ENCODE measurements at regions of chr19 and their contacts with region 1.

Region 1: GRCh38 chr19:7705387-7706187 is 3.7 kb upstream of the FCER2 start:
- DNase-seq: peak; percentile 88
- ATAC-seq: peak; percentile 94
- H3K4me3 Mint-ChIP-seq: no peak overlapping the region
- H3K27ac Mint-ChIP-seq: peak overlapping the region; percentile 80
- H3K4me1 Mint-ChIP-seq: peaks cover 40% of the 10 kb centered on the region
- H3K27me3 Mint-ChIP-seq: no peaks in the 10 kb centered on the region

Region 2: DNA sequence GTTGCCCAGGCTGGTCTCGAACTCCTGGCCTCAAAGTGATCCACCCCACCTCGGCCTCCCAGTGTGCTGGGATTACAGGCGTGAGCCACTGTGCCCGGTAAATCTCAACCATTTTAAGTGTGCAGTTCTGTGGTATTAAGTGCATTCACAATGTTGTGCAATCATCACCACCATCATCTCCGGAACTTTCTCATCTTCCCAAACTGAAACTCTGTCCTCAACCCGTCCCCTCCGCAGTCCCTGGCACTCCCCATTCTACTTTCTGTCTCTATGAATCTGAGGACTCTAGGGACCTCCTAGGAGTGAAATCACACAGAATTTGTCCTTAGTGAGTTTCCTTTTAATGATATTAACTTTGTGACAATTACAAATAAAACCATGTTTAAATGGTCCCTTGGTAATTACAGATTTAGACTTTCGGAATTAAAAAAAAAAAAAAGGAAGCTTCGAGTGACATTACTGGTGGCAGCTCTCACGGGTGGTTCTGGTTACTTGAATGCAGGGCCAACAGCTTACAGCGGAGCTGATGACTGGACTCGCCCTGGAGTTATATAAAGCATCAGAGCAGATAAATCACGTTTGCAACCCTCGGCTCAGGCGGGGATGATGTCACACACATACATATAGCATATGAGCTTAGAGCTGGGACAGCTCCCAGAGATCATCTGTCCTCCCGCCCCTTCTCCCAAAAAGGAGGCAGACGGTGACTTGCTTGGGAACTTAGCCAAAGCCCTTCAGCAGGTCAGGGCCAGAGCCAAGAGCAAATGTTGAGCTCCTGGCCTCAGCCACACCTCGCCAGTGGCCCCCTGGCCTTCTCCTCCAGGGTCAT is 546.3 kb before region 1 on chr19:
- CTCF ChIA-PET with region 1: no interaction called
- POLR2A ChIA-PET with region 1: no interaction called
- intact Hi-C with region 1: no loop called
- DNase-seq: no peak
- ATAC-seq: no peak
- H3K4me3 Mint-ChIP-seq: no peak overlapping the region
- H3K27ac Mint-ChIP-seq: no peak overlapping the region
- H3K4me1 Mint-ChIP-seq: no peaks in the 10 kb centered on the region
- H3K27me3 Mint-ChIP-seq: no peaks in the 10 kb centered on the region

Region 3: GRCh38 chr19:7734220-7735203 is 28.9 kb after region 1 on chr19:
- CTCF ChIA-PET with region 1: no interaction called
- POLR2A ChIA-PET with region 1: no interaction called
- intact Hi-C with region 1: loop called in 1 of 2 experiments (anchors 5 kb)
- DNase-seq: no peak
- ATAC-seq: no peak
- H3K4me3 Mint-ChIP-seq: no peak overlapping the region
- H3K27ac Mint-ChIP-seq: no peak overlapping the region
- H3K4me1 Mint-ChIP-seq: peaks cover 14% of the 10 kb centered on the region
- H3K27me3 Mint-ChIP-seq: peaks cover 41% of the 10 kb centered on the region

Region 4: DNA sequence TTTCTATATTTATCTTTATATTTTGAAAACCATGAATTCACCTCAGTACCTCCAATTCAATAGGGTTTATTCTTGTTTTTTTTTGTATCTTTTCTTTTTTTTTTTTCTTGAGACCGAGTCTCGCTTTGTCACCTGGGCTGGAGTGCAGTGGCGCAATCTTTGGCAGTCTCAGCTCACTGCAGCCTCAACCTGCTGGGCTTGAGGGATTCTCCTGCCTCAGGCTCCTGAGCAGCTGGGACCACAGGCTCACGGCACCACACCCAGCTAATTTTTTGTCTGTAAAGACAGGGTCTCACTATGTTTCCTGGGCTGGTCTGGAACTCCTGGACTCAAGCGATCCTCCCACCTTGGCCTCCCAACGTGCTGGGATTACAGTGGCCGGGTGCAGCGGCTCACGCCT is 101.3 kb after region 1 on chr19:
- CTCF ChIA-PET with region 1: no interaction called
- POLR2A ChIA-PET with region 1: no interaction called
- intact Hi-C with region 1: loop called in 1 of 2 experiments (anchors 1 kb)
- DNase-seq: no peak
- ATAC-seq: no peak
- H3K4me3 Mint-ChIP-seq: no peak overlapping the region
- H3K27ac Mint-ChIP-seq: no peak overlapping the region
- H3K4me1 Mint-ChIP-seq: peaks cover 11% of the 10 kb centered on the region
- H3K27me3 Mint-ChIP-seq: peaks cover 35% of the 10 kb centered on the region

Region 5: DNA sequence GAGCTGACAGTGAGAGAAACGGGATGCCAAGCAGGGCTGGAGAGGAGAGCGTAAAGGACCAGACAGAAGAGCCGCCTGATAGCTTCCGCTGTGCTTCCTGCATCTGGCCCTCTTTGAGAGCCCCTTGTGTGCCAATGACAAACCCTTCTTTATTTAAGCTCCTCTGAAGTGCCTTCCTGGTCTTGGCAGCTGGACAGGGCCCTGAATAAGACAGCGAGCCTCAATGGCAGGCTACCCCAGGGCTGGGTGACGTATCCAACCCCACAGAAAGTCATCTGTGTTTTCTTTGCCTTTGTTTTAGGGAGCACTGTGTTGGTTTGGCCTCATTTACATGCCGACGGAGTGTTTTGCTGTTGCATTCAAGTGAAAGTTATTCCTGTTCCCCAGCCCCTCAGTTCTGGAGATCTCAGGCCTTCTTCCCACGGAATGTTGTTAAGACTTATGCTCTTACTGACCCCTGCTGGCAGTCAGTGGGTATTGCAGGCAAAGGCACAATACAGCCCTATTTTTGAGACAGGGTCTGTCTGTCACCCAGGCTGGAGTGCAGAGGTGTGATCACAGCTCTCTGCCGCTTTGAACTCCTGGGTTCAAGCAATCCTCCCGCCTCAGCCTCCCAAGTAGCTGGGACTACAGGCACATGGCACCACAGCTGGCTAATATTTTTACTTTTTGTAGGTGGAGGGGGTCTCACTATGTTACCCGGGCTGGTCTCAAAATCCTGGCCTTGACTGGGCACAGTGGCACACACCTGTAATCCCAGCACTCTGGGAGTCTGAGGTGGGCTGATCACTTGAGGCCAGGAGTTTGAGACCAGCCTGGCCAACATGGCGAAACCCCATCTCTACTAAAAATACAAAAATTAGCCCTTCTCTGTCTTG is 363.7 kb after region 1 on chr19:
- CTCF ChIA-PET with region 1: no interaction called
- POLR2A ChIA-PET with region 1: no interaction called
- intact Hi-C with region 1: no loop called
- DNase-seq: peak; percentile 48
- ATAC-seq: no peak
- H3K4me3 Mint-ChIP-seq: no peak overlapping the region
- H3K27ac Mint-ChIP-seq: no peak overlapping the region
- H3K4me1 Mint-ChIP-seq: peaks cover 2% of the 10 kb centered on the region
- H3K27me3 Mint-ChIP-seq: no peaks in the 10 kb centered on the region

Measured in activated CD4-positive, alpha-beta T cell treated with anti-CD3 and anti-CD28 coated beads for 36 hours (primary cell).